Mammary epithelial cell (primary cell): ENCODE measurements at regions of chr3 and their contacts with region 1.

Region 1: DNA sequence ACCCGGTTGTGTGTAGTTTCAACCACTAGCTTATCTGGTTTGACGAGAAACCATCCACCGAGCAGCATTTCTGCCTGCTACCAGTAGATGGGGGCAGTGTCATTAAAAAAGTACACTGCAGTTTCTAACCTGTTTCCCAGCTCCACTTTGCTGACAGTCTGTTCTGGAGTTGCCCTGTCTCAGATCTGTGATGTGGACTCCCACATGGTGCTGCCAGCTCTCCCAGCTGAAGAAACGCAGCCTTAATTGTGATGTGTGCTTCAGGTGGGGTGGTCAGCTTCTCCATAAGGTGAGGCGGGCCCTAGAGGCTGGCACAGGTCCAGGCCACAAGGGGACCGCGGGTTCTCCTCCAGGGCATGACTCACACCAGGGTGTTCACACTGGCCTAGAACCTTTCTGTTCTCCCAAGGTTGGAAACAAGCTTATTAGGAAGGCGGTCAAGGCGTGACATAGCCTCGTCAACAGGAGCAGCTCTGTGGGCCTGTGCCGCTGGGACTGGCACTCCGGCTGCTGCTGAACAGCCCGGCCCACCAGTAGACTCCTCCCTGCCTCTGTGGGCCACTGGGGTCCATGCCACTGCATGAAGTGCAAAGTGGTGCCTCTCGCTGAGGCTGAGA is 2.9 kb upstream of the FAM43A start:
- DNase-seq: peak; percentile 86
- H3K4me3 ChIP-seq: no peak overlapping the region
- H3K27ac ChIP-seq: no peak overlapping the region
- H3K4me1 ChIP-seq: peaks cover 40% of the 10 kb centered on the region
- H3K27me3 ChIP-seq: peaks cover 15% of the 10 kb centered on the region
- CTCF ChIP-seq: peak; percentile 87 to 92

Region 2: GRCh38 chr3:194787072-194787471 is 104.3 kb after region 1 on chr3:
- CTCF ChIA-PET with region 1: no interaction called
- dilution Hi-C with region 1: no loop called
- in situ Hi-C with region 1: no loop called
- intact Hi-C with region 1: no loop called
- DNase-seq: no peak
- H3K4me3 ChIP-seq: no peak overlapping the region
- H3K27ac ChIP-seq: no peak overlapping the region
- H3K4me1 ChIP-seq: no peaks in the 10 kb centered on the region
- H3K27me3 ChIP-seq: no peaks in the 10 kb centered on the region
- CTCF ChIP-seq: no peak

Region 3: DNA sequence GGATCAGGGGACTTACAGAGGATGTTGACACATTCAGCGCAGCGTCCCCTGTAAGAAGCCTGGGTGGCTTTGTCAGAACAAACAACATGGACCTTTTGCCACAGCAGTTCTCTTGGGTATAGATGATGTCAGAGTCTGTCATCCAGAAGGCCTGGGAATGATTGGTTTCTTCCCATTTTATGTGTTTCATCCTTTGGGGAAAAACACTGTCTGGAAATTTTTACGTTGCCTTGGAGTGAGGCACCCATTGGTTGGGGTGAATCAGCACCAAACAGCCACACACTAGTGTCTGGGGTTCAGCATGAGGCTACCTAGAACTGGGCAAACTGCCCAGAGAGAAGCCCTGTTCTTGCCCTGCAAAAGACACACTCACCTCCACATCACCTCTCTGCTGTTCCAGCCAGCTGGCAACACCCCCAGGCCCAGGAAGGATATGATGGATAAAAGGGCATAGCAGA is 125.9 kb after region 1 on chr3:
- CTCF ChIA-PET with region 1: no interaction called
- dilution Hi-C with region 1: no loop called
- in situ Hi-C with region 1: no loop called
- intact Hi-C with region 1: loop called (anchors 5 kb)
- DNase-seq: peak; percentile 96
- H3K4me3 ChIP-seq: no peak overlapping the region
- H3K27ac ChIP-seq: no peak overlapping the region
- H3K4me1 ChIP-seq: peaks cover 18% of the 10 kb centered on the region
- H3K27me3 ChIP-seq: no peaks in the 10 kb centered on the region
- CTCF ChIP-seq: no peak

Region 4: DNA sequence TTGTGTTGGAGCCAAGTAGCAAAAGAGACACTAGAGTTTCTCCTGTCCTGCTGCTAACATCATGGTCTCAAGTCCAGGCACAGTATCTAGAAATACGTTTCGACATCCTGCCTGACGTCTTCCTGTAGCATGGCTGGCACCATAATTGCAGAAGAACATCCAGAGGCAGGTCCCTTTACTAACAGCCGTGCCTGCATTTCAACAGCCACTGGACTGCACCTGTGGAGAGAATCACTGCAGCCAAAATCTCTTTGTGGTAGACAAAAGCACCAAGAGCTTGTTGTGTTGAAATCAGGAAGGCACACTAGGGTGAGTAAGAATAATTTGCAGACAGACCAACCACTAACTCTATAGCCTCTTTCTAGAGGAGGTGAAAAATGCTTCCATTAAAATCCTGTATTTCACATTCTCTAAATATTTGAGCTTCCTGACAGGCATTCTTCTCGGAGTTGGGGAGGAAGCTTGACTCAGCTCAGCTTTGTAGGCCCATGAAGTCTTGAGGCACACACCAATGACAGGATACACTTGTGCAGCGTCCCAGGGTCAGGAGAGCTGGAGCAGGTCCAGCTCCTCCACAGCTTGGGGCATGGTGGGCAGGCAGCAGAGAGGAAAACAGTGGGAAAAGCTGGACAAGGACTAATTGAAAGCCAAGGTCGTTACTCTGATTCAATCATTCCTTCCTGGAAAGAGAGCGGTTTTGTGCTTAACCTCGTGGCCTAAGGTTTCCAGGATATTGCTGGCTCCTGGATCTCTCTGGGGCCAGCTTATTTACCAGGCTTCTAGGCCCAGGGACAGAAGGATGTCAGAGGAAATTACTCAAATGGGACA is 247.8 kb after region 1 on chr3:
- CTCF ChIA-PET with region 1: no interaction called
- dilution Hi-C with region 1: no loop called
- in situ Hi-C with region 1: loop called in 1 of 2 experiments (anchors 25 kb)
- intact Hi-C with region 1: no loop called
- DNase-seq: peak; percentile 41
- H3K4me3 ChIP-seq: no peak overlapping the region
- H3K27ac ChIP-seq: no peak overlapping the region
- H3K4me1 ChIP-seq: peaks cover 10% of the 10 kb centered on the region
- H3K27me3 ChIP-seq: no peaks in the 10 kb centered on the region
- CTCF ChIP-seq: no peak

Region 5: DNA sequence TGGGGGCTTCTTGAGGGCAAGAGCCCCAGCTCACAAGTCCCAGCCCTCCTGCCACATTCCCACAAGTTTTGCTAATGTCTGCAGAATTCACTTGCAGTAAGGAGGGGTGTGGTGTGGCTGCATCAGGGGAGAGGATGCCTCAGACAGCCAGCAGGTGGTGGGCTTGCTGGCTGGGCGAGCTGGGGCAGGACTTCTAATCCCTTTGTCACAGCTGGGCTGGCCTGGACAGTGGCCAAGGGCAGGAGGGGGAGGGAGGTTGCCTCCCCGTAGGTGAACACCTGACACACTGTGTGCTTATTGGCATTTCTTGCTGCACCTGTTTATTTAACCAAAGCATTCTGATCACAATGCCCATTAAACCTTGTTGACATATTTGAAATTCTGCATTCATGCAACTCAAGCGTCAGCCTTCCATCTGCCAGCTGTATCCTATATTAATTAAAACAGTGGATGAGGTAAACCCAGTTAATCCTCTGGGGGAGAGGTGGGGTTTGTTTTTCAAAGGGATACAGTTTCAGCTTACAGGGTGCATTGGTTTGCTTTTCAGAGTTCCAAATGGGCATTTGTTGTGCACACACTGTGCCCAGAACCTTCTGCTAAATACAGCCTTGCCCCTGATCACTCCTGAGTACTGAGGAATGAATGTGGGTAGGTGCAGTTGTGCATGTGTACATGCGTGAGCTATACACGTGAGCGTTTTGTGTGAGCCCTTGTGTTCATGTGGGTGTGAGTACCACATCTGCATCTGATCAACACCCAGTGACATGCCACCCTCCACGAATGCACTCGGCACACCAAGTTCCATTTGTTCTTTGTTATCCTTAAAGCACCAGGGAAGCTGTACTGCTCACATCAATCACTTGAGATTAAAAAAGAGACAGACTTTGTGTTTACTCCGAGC is 319.4 kb after region 1 on chr3:
- CTCF ChIA-PET with region 1: no interaction called
- dilution Hi-C with region 1: no loop called
- in situ Hi-C with region 1: no loop called
- intact Hi-C with region 1: loop called (anchors 1 kb)
- DNase-seq: peak; percentile 52
- H3K4me3 ChIP-seq: no peak overlapping the region
- H3K27ac ChIP-seq: no peak overlapping the region
- H3K4me1 ChIP-seq: no peaks in the 10 kb centered on the region
- H3K27me3 ChIP-seq: no peaks in the 10 kb centered on the region
- CTCF ChIP-seq: peak; percentile 50 to 62

Region 6: DNA sequence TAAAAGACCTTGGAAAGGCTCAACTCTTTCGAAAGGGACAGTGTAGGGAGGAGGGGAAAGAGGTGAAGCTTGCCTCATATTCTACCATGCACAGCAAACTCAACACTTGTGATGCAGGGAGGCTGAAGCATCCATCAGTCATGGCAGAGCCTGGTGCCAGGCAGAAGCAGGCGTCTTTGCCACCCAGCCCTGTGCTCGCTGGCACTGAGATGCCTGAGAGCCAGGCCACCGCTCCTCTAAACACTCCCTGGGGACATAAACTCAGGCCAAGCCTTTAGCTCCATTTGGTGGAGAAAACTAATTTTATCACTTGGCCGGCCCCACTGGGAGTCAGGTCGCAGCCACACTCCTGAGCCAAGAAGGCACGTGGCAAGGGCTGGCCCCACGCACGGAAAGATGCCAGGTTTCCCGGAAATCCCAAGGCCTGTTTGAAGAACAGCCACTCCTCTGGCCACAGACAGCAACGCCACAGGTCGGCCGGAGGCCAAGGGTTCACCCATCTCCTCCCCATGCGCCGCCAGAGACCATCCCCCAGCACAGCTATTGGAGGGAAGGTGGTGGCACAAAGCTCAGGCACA is 557.5 kb after region 1 on chr3:
- CTCF ChIA-PET with region 1: no interaction called
- dilution Hi-C with region 1: loop called (anchors 5 kb)
- in situ Hi-C with region 1: no loop called
- intact Hi-C with region 1: no loop called
- DNase-seq: no peak
- H3K4me3 ChIP-seq: no peak overlapping the region
- H3K27ac ChIP-seq: no peak overlapping the region
- H3K4me1 ChIP-seq: peaks cover 10% of the 10 kb centered on the region
- H3K27me3 ChIP-seq: no peaks in the 10 kb centered on the region
- CTCF ChIP-seq: no peak

Region 7: GRCh38 chr3:195522254-195523023 is 839.6 kb after region 1 on chr3:
- CTCF ChIA-PET with region 1: no interaction called
- dilution Hi-C with region 1: no loop called
- in situ Hi-C with region 1: loop called in 1 of 2 experiments (anchors 25 kb)
- intact Hi-C with region 1: loop called (anchors 1 kb)
- DNase-seq: no peak
- H3K4me3 ChIP-seq: no peak overlapping the region
- H3K27ac ChIP-seq: no peak overlapping the region
- H3K4me1 ChIP-seq: no peaks in the 10 kb centered on the region
- H3K27me3 ChIP-seq: no peaks in the 10 kb centered on the region
- CTCF ChIP-seq: peak; percentile 48 to 51